ENCODE measurements at regions of chr18 and their contacts with region 1.

Region 1: GRCh38 chr18:13268158-13269012 is 49.8 kb downstream of the LDLRAD4 start:
- DNase-seq: no peak
- ATAC-seq: peak in 1 of 8 donors; percentile 7
- H3K4me3 ChIP-seq: no peak overlapping the region
- H3K27ac ChIP-seq: peak overlapping the region; percentile 10 to 81 (median 66)
- H3K4me1 ChIP-seq: peaks cover 35 to 100% (median 93%) of the 10 kb centered on the region in 9 donors
- H3K27me3 ChIP-seq: no peaks in the 10 kb centered on the region
- CTCF ChIP-seq: no peak

Region 2: DNA sequence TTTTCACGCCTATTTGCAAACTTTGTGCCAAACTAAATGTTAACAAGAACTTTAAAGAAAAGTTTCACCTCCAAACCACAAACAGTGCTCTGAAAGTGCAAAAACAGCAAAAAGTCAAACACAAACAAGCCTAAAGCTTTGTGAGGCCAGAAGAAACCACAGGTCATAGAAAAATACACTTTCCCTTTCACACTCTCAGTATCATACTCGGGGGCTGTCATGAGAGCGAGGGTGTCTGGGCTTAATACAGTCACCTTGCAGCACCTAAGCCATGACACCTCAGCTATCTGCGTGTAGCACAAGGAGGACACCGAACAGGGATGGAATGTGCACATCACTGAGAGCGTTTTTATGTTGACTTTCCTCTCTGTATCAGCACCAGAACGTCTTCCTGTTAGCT is 347.2 kb before region 1 on chr18:
- intact Hi-C with region 1: no loop called
- DNase-seq: no peak
- ATAC-seq: no peak
- H3K4me3 ChIP-seq: no peak overlapping the region
- H3K27ac ChIP-seq: no peak overlapping the region
- H3K4me1 ChIP-seq: no peaks in the 10 kb centered on the region
- H3K27me3 ChIP-seq: no peaks in the 10 kb centered on the region
- CTCF ChIP-seq: no peak

Region 3: DNA sequence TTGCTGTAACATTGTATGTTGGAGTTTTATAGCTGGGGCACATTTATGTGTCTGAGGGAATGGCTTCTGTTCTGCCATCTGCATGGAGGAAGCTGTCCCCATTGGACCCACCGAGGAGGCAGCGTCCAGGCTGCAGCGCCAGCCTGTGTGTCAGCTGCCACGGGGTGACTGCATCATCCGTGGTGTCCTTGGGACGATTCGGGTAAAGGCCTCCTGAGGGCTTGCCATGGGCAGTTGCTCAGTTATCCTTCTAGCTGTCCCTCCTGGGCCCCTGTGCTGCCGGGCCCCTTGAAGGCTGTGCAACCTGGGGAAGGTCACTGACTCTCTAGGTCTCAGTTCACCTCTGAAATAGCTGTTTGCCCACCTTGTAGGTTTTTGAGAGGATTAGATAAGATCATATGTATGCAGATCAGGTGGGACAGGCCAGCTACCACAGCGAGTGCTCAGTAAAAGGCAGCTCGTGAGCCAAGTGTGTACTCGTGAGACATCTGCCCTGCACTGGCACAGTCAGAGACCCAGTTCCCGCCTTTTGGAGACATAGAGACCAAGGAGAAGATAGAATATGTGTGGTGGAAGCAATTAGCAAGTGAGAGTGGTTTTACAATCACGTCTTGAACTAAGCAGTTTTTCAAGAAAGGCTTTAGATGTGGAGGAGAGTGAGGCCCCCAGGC is 39.2 kb before region 1 on chr18:
- intact Hi-C with region 1: loop called in 5 of 10 experiments (anchors 5 to 10 kb)
- DNase-seq: no peak
- ATAC-seq: no peak
- H3K4me3 ChIP-seq: no peak overlapping the region
- H3K27ac ChIP-seq: no peak overlapping the region
- H3K4me1 ChIP-seq: peaks cover 4 to 53% (median 35%) of the 10 kb centered on the region in 9 donors
- H3K27me3 ChIP-seq: no peaks in the 10 kb centered on the region
- CTCF ChIP-seq: no peak

Region 4: GRCh38 chr18:13318731-13319501 is 50.5 kb after region 1 on chr18:
- intact Hi-C with region 1: loop called in 1 of 10 experiments (anchors 10 kb)
- DNase-seq: no peak
- ATAC-seq: peak; percentile 19 to 72 (median 69)
- H3K4me3 ChIP-seq: no peak overlapping the region
- H3K27ac ChIP-seq: peak overlapping the region in 7 of 10 donors; percentile 26 to 63 (median 49)
- H3K4me1 ChIP-seq: peaks cover 0 to 27% (median 18%) of the 10 kb centered on the region in 9 donors
- H3K27me3 ChIP-seq: no peaks in the 10 kb centered on the region
- CTCF ChIP-seq: no peak

Region 5: DNA sequence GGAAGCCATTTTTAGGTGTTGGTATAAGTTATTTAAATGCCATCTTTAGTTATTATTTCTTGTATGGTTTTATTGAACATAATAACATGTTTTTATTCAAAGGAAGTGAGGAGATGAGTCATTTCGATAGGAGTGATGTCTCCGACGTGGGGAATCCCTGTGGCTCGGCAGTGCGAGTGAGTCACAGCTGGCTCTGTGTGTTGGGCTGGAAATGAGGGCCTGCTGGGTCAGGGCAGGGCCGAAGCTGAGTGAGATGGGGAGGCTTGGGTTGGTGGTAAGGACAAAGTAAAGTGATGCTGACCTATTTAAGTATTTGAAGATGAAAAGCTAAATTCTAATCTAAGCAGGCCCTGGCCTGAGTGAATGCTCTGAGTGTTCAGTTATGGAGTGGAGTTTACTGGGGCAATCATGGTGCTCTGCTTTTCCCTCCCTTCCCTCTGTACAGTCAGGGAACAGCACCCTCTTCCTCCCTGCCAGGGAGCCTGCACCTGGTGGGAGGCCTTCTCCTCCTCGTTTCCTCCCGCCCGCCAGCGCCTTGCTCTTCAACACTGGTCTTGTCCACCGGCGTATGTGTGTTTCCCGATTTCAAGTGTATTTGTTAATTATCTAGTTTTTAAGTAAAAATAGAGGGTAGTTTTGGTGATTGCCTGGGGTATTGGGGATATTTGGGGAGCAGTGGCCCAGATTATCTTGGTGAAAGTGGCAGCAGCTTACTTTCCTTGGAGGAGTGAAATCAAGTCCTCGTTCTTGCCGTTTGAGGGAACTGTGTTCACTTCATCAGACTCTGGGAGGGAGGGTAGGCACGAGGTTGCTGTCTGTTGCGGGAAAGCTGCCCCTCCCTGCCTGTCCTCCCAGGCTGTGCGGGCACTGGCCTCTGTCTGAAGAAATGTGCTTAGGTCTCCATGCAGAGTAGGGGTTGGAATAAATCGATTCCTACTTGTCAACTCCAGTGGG is 107.2 kb after region 1 on chr18:
- intact Hi-C with region 1: loop called in 3 of 10 experiments (anchors 5 to 10 kb)
- DNase-seq: peak; percentile 59 to 76
- ATAC-seq: peak; percentile 51 to 89 (median 78)
- H3K4me3 ChIP-seq: no peak overlapping the region
- H3K27ac ChIP-seq: peak overlapping the region in 8 of 10 donors; percentile 3 to 75 (median 64)
- H3K4me1 ChIP-seq: peaks cover 11 to 78% (median 56%) of the 10 kb centered on the region in 9 donors
- H3K27me3 ChIP-seq: no peaks in the 10 kb centered on the region
- CTCF ChIP-seq: peak in 1 of 9 donors; percentile 30

Region 6: GRCh38 chr18:13520306-13520705 is 251.9 kb after region 1 on chr18:
- intact Hi-C with region 1: loop called in 1 of 10 experiments (anchors 5 kb)
- DNase-seq: peak in 1 of 2 donors; percentile 45
- ATAC-seq: peak in 7 of 8 donors; percentile 65 to 98 (median 86)
- H3K4me3 ChIP-seq: no peak overlapping the region
- H3K27ac ChIP-seq: peak overlapping the region in 8 of 10 donors; percentile 14 to 78 (median 54)
- H3K4me1 ChIP-seq: peaks cover 0 to 32% (median 22%) of the 10 kb centered on the region in 9 donors
- H3K27me3 ChIP-seq: no peaks in the 10 kb centered on the region
- CTCF ChIP-seq: no peak